A549 (cell line): ENCODE measurements at regions of chr15 and their contacts with region 1.

Region 1: DNA sequence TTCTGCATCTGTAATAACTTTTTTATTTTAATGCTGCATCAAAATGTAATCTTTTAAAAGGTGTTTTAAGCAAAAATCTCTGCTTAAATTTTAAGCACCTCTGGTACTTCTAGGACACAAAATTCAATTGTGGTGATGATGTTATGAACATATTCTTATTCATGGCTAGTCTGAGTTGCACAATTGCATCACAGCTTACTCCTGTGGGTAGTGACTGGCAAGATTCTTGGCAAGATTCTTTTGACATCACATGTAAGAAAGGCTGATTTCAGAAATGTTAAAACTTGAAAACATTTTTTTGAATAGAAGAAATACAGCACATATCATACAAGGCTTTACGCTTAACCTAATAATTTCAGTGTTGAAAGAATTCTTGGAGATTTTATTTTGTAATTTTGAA is 35.7 kb downstream of the IQCH start:
- DNase-seq: no peak
- ATAC-seq: no peak
- H3K4me3 ChIP-seq: no peak overlapping the region
- H3K27ac ChIP-seq: no peak overlapping the region
- H3K4me1 ChIP-seq: no peaks in the 10 kb centered on the region
- CTCF ChIP-seq: no peak
- EP300 ChIP-seq: no peak
- POLR2A ChIP-seq: no peak
- RAD21 ChIP-seq: no peak

Region 2: GRCh38 chr15:67080900-67081431 is 209.4 kb before region 1 on chr15:
- CTCF ChIA-PET with region 1: no interaction called
- POLR2A ChIA-PET with region 1: no interaction called
- DNase-seq: peak in 1 of 2 experiments; percentile 71
- ATAC-seq: peak in 1 of 2 experiments; percentile 7; a peak in 2 of 6 replicates
- H3K4me3 ChIP-seq: no peak overlapping the region
- H3K27ac ChIP-seq: peak overlapping the region in 1 of 2 experiments; percentile 62; a peak in 4 of 6 replicates
- H3K4me1 ChIP-seq: peaks cover 99% of the 10 kb centered on the region
- CTCF ChIP-seq: peak; percentile 31; the same call in 2 of the 3 replicates
- EP300 ChIP-seq: no peak
- POLR2A ChIP-seq: no peak
- RAD21 ChIP-seq: peak in 1 of 2 experiments; percentile 32; a peak in 3 of 5 replicates

Region 3: GRCh38 chr15:67280217-67280616 is 10.1 kb before region 1 on chr15:
- CTCF ChIA-PET with region 1: interaction called, 15 read pairs
- POLR2A ChIA-PET with region 1: no interaction called
- DNase-seq: no peak
- ATAC-seq: no peak
- H3K4me3 ChIP-seq: no peak overlapping the region
- H3K27ac ChIP-seq: no peak overlapping the region
- H3K4me1 ChIP-seq: no peaks in the 10 kb centered on the region
- CTCF ChIP-seq: no peak
- EP300 ChIP-seq: no peak
- POLR2A ChIP-seq: no peak
- RAD21 ChIP-seq: no peak